ENCODE measurements at regions of chr5 and their contacts with region 1.

Region 1: GRCh38 chr5:83564069-83564749 is 92.7 kb downstream of the VCAN start:
- H3K4me3 Mint-ChIP-seq: no peak overlapping the region
- H3K27ac Mint-ChIP-seq: no peak overlapping the region
- H3K4me1 Mint-ChIP-seq: peaks cover under 1% of the 10 kb centered on the region
- H3K27me3 Mint-ChIP-seq: no peaks in the 10 kb centered on the region

Region 2: GRCh38 chr5:82641331-82642003 is 922.7 kb before region 1 on chr5:
- intact Hi-C with region 1: loop called (anchors 1 kb)
- H3K4me3 Mint-ChIP-seq: no peak overlapping the region
- H3K27ac Mint-ChIP-seq: no peak overlapping the region
- H3K4me1 Mint-ChIP-seq: peaks cover 7% of the 10 kb centered on the region
- H3K27me3 Mint-ChIP-seq: no peaks in the 10 kb centered on the region

Region 3: GRCh38 chr5:83085106-83085505 is 479.1 kb before region 1 on chr5:
- intact Hi-C with region 1: loop called (anchors 10 kb)
- H3K4me3 Mint-ChIP-seq: no peak overlapping the region
- H3K27ac Mint-ChIP-seq: no peak overlapping the region
- H3K4me1 Mint-ChIP-seq: peaks cover 16% of the 10 kb centered on the region
- H3K27me3 Mint-ChIP-seq: no peaks in the 10 kb centered on the region

Region 4: GRCh38 chr5:83281658-83282057 is 282.6 kb before region 1 on chr5:
- intact Hi-C with region 1: no loop called
- H3K4me3 Mint-ChIP-seq: no peak overlapping the region
- H3K27ac Mint-ChIP-seq: no peak overlapping the region
- H3K4me1 Mint-ChIP-seq: peaks cover 8% of the 10 kb centered on the region
- H3K27me3 Mint-ChIP-seq: no peaks in the 10 kb centered on the region

Region 5: GRCh38 chr5:83430130-83431010 is 133.8 kb before region 1 on chr5:
- intact Hi-C with region 1: loop called (anchors 5 kb)
- H3K4me3 Mint-ChIP-seq: no peak overlapping the region
- H3K27ac Mint-ChIP-seq: no peak overlapping the region
- H3K4me1 Mint-ChIP-seq: peaks cover 19% of the 10 kb centered on the region
- H3K27me3 Mint-ChIP-seq: no peaks in the 10 kb centered on the region